A549 (cell line): ENCODE measurements at regions of chr19 and their contacts with region 1.

Region 1: GRCh38 chr19:47075179-47075810 is 26.9 kb upstream of the TMEM160 start:
- DNase-seq: no peak
- ATAC-seq: no peak
- H3K4me3 ChIP-seq: no peak overlapping the region
- H3K27ac ChIP-seq: no peak overlapping the region
- H3K4me1 ChIP-seq: peaks cover 8% of the 10 kb centered on the region
- CTCF ChIP-seq: no peak
- EP300 ChIP-seq: no peak
- POLR2A ChIP-seq: no peak
- RAD21 ChIP-seq: no peak

Region 2: DNA sequence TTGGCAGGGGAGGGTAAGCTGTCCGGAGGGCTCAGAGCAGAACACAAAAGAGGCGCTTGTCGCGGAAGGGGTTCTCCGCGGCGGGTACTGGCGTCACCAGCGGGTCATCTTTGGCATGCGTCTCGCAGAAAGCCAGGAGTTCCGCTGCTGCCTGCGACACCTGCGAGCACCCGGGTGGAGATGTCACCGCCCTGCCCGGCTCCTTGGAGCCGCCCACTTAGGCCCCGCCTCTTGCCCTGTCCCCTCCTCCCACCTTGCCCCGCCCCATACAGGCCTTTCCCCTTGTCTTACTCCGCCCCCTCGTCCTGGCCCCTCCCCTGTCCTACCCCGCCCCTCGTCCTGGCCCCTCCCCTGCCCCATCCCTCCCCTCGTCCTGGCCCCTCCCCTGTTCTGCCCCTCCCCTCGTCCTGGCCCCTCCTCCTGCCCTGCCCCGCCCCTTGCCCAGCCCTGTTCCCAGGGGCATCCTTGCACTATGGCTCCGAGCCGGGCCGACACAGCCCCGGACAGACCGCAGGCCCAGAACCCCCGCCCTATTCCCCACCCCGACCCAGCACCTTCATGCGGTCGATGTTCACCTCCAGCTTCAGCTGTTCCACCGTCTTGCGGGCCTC is 441.1 kb before region 1 on chr19:
- CTCF ChIA-PET with region 1: no interaction called
- POLR2A ChIA-PET with region 1: no interaction called
- DNase-seq: peak; percentile 96 to 97
- ATAC-seq: peak; percentile 31 to 75
- H3K4me3 ChIP-seq: peak overlapping the region; percentile 53
- H3K27ac ChIP-seq: peak overlapping the region; percentile 48 to 69; a peak in 5 of 6 replicates
- H3K4me1 ChIP-seq: peaks cover 21% of the 10 kb centered on the region
- CTCF ChIP-seq: no peak
- EP300 ChIP-seq: no peak
- POLR2A ChIP-seq: no peak
- RAD21 ChIP-seq: no peak

Region 3: DNA sequence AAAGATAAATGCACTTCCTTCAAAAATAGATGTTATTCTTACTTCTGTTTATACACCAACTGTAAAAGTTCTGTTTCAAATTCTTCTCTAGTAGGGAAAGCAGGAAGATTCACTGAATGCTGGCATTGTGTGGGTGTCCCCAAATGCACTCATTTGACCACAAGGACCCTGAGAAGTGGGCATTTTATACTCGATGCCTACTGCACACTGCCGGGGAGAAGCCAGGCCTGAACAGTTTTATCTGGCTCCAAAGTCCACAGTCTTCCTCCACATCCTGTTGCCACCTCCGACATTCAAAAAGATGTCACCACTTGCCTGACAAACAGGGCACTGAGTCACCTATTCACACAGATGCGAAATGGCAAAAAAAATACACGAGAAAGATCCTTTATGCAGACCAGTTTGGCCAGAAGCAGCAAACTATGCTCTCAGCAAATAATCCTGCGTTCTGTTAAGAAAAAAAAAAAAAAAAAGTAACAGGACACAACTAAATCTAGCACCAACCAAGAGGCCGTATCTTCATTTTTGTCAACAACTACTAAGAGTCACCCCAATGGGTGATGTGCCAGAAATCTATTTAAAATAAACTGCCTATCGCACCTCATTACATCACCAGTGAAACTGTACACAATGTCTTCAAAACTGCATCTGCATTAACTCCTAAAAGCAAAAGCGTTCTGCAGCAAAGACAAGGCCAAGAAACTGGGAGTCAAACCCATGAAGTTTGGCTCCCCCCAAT is 32.1 kb after region 1 on chr19:
- CTCF ChIA-PET with region 1: interaction called, 11 read pairs
- POLR2A ChIA-PET with region 1: no interaction called
- DNase-seq: no peak
- ATAC-seq: no peak
- H3K4me3 ChIP-seq: no peak overlapping the region
- H3K27ac ChIP-seq: peak overlapping the region; percentile 6 to 45; a peak in 4 of 6 replicates
- H3K4me1 ChIP-seq: peaks cover 39% of the 10 kb centered on the region
- CTCF ChIP-seq: no peak
- EP300 ChIP-seq: no peak
- POLR2A ChIP-seq: no peak
- RAD21 ChIP-seq: no peak